ENCODE measurements at regions of chr21 and their contacts with region 1.

Region 1: DNA sequence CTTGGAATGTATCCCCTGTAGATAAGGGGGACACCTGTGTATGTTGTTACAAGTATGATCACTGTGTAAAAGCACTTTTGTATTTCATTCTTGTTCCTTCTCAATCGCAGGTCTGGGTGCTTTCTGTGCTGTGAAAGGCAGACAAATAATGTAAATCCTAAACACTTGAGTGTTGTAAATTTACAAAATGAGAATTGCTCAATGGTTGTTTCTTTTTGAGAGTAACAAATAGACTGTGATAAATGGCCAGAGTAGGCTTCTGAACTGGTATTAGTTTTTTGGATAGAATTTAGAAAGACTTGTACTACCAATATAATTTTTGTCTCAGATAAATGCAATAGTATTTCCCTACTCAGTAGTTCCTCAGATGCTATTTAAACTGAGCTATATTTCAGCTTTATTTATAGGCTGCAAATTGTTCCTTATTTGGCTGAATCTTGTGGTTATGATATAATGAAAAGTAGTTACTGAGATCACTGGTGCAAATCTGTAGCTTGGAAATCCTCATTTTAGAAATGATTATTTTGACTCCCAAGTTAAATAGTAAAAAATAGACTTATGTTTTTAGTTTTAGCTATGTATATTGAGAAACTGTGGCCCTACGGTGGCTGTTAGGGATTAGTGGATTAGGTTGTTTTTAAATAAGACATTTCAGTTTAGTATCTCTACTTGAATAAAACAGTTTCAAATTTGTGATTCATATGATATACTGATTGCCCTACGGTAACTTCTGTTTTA is 9.2 kb downstream of the BACH1 start:
- DNase-seq: no peak
- ATAC-seq: no peak
- H3K4me3 Mint-ChIP-seq: no peak overlapping the region
- H3K27ac Mint-ChIP-seq: no peak overlapping the region
- H3K4me1 Mint-ChIP-seq: peaks cover 64% of the 10 kb centered on the region
- H3K27me3 Mint-ChIP-seq: no peaks in the 10 kb centered on the region

Region 2: DNA sequence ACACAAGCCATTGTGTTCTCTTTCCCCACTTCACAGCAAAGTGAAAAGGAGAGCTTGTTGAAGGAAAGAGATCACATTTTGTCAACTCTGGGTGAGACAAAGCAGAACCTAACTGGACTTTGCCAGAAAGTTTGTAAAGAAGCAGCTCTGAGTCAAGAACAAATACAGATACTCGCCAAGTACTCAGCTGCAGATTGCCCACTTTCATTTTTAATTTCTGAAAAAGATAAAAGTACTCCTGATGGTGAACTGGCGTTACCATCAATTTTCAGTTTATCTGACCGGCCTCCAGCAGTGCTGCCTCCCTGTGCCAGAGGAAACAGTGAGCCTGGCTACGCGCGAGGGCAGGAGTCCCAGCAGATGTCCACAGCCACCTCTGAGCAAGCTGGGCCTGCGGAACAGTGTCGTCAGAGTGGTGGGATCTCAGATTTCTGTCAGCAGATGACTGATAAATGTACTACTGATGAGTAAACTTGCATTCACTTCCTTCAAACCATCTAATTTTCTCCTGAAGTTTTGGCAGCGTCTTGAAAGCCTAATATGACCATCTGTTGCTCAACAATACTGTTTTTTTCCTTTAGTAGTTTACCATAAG is 34.6 kb after region 1 on chr21:
- CTCF ChIA-PET with region 1: interaction called, 3 read pairs
- POLR2A ChIA-PET with region 1: no interaction called
- intact Hi-C with region 1: loop called in 1 of 2 experiments (anchors 2 kb)
- DNase-seq: peak; percentile 79
- ATAC-seq: peak; percentile 94
- H3K4me3 Mint-ChIP-seq: peak overlapping the region; percentile 29
- H3K27ac Mint-ChIP-seq: peak overlapping the region; percentile 79
- H3K4me1 Mint-ChIP-seq: peaks cover 42% of the 10 kb centered on the region
- H3K27me3 Mint-ChIP-seq: no peaks in the 10 kb centered on the region